Right ventricle myocardium inferior (tissue), 1 donor: ENCODE measurements at regions of chr13 and their contacts with region 1.

Region 1: GRCh38 chr13:25037057-25037813 is 58.7 kb upstream of the PABPC3 start:
- DNase-seq: no peak
- ATAC-seq: peak; percentile 54

Region 2: GRCh38 chr13:24851545-24851944 is 185.7 kb before region 1 on chr13:
- intact Hi-C with region 1: no loop called
- DNase-seq: no peak
- ATAC-seq: no peak

Region 3: DNA sequence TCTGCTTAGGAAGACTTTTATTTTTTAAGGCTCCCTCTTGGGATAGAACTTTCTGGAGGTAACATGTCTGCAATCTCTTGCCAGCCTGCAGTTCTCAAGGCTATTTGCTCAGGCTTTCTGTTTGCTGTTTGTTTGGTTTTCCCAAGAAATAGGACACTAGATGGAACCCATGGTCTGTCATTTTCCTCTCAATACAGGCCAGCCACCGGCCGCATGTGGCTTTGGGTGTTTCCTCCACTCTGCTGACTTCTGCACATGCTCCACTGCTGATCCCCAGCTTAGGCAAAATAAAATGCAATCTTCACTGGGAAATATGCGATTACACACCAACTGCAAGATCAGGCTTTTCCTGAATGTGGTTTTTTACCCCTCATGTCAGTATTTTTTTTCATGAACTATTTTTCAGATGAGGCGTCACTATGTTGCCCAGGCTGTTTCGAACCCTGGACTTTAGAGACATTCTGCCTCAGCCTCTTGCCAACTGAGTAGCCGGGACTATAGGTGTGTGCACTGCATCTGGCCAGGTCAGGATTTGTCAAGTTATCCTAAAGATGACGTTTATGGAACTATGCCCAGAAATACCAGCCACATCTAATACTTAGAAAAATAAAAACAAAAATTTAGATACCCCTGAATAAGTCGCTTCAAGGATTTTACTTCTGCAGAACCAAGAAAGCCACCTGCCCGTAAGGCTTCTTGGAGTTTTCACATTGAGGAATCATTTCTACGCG is 35.6 kb before region 1 on chr13:
- intact Hi-C with region 1: loop called (anchors 2 kb)
- DNase-seq: no peak
- ATAC-seq: no peak